ENCODE measurements at regions of chr19 and their contacts with region 1.

Region 1: DNA sequence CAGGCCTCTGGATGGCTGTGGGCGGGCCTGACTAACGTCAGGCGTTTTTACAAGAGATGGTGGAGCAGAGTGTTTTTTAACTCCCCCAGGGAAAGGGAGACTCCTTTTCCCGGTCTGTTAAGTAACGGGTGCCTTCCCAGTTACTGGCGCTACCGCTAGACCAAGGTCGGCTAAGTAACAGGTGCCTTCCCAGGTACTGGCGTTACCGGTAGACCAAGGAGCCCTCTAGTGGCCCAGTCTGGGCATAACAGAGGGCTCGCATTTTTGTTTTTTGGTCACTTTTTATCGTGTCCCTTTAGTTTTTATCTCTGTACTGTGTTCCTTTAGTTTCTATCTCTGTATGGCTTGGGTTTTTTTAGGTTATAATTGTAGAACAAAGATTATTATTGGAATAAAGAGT is 10.0 kb downstream of the ZNF383 start:
- DNase-seq: no peak
- ATAC-seq: no peak
- H3K4me3 ChIP-seq: no peak overlapping the region
- H3K27ac ChIP-seq: no peak overlapping the region
- H3K4me1 ChIP-seq: no peaks in the 10 kb centered on the region
- H3K27me3 ChIP-seq: no peaks in the 10 kb centered on the region
- CTCF ChIP-seq: peak in 1 of 5 experiments; percentile 27
- POLR2A ChIP-seq: no peak

Region 2: DNA sequence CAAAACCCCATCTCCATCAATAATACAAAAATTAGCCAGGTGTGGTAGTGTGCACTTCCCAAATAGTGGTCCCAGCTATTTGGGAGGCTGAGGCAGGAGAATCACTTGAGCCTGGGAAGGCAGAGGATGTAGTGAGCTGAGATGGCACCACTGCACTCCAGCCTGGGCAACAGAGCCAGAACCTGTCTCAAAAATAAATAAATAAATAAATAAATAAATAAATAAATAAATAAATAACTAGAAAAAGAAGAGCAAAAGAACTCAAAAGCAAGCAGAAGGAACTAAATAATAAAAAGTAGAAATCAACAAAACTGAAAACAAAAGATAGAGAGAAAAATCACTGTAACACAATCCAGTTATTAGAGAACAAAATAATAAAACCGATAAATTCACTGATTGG is 67.8 kb before region 1 on chr19:
- in situ Hi-C with region 1: no loop called
- intact Hi-C with region 1: no loop called
- DNase-seq: no peak
- ATAC-seq: no peak
- H3K4me3 ChIP-seq: no peak overlapping the region
- H3K27ac ChIP-seq: no peak overlapping the region
- H3K4me1 ChIP-seq: no peaks in the 10 kb centered on the region
- H3K27me3 ChIP-seq: no peaks in the 10 kb centered on the region
- CTCF ChIP-seq: no peak
- POLR2A ChIP-seq: no peak

Region 3: DNA sequence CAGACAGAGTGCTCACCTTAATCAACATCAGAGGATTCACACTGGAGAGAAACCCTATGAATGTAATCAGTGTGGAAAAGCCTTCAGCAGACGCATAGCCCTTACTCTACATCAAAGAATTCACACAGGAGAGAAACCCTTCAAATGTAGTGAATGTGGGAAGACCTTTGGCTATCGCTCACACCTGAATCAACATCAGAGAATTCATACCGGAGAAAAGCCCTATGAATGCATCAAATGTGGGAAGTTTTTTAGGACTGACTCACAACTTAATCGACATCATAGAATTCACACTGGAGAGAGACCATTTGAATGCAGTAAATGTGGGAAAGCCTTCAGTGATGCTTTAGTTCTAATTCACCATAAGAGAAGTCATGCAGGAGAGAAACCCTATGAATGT is 161.2 kb after region 1 on chr19:
- in situ Hi-C with region 1: loop called in 1 of 4 experiments (anchors 25 kb)
- intact Hi-C with region 1: no loop called
- DNase-seq: no peak
- ATAC-seq: no peak
- H3K4me3 ChIP-seq: peak overlapping the region in 1 of 4 donors; percentile 42
- H3K27ac ChIP-seq: no peak overlapping the region
- H3K4me1 ChIP-seq: no peaks in the 10 kb centered on the region
- H3K27me3 ChIP-seq: no peaks in the 10 kb centered on the region
- CTCF ChIP-seq: no peak
- POLR2A ChIP-seq: no peak